ENCODE measurements at regions of chr15 and their contacts with region 1.

Region 1: DNA sequence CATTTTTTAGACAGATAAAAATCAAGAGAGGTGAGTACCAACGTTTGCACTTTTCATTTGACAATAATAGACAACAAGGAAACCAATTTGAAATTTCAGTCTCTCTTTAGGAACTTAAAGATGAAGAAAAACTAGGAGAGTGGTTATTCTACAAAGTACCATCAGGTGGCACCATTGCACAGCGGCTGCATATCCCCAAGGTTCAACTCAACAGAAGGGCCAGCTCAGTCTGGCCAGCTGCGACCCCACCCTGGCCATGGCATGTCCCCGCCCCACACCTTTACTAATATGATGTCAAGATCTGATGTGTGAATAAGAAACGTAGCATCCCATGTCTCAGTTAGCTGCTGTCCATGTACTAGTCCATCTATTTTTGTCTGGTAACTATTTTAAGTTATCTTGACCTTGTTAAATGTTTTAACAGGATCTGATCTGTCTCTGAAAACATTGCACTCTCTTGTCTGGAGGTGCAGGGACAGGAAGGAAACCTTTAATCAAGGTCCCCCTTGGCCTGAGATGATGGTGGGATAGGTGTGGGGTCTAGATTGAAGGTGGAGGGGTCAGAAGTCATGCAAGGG is 35.5 kb upstream of the CGNL1 start:
- DNase-seq: no peak
- H3K4me3 ChIP-seq: no peak overlapping the region
- H3K27ac ChIP-seq: no peak overlapping the region
- H3K4me1 ChIP-seq: peaks cover 0 to 18% (median 0%) of the 10 kb centered on the region in 3 donors
- H3K27me3 ChIP-seq: no peaks in the 10 kb centered on the region
- CTCF ChIP-seq: peak; percentile 47 to 84 (median 75)
- POLR2A ChIP-seq: no peak

Region 2: DNA sequence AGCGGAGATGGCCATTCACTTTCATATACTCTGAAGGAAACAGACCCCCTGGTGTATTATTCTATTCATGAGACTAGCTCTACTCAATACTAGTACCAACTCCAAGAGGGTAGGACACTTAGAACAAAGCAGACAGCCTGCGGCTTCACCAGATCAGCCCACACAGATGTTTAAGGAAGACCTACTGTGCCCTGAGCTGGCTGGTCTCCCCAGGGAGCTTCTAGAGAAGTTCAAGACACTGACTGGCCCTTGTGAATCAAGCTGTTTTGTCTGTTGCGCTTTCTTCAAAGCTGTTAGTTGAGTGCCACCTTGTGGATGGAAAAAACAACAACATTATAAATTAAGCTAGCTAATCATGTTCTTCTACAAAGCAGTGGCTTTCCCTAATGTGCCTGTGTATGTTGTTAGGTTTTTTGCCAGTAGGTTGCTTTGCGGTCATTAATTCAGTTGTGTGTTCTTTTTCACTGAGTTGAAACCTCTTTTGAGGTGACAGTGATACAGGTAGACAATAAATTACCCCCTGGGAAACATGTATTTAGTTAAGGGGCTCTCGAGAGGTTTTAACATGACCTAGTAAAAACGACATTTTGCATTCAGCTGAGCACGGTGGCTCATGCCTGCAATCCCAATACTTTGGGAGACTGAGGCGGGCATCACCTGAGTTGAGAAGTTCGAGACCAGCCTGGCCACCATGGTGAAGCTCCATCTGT is 186.8 kb after region 1 on chr15:
- intact Hi-C with region 1: loop called (anchors 5 kb)
- DNase-seq: peak; percentile 14
- H3K4me3 ChIP-seq: no peak overlapping the region
- H3K27ac ChIP-seq: no peak overlapping the region
- H3K4me1 ChIP-seq: peaks cover 0 to 20% (median 7%) of the 10 kb centered on the region in 3 donors
- H3K27me3 ChIP-seq: no peaks in the 10 kb centered on the region
- CTCF ChIP-seq: peak in 5 of 6 experiments; percentile 57 to 76 (median 64)
- POLR2A ChIP-seq: no peak

Measured in esophagus squamous epithelium (tissue), 5 donors.